Endothelial cell of umbilical vein (primary cell): ENCODE measurements at regions of chr5 and their contacts with region 1.

Region 1: GRCh38 chr5:96256778-96257470 is 176.1 kb downstream of the PCSK1 start:
- DNase-seq: peak; percentile 64
- H3K4me3 ChIP-seq: no peak overlapping the region
- H3K27ac ChIP-seq: no peak overlapping the region
- H3K4me1 ChIP-seq: peaks cover 55% of the 10 kb centered on the region
- H3K27me3 ChIP-seq: no peaks in the 10 kb centered on the region
- CTCF ChIP-seq: no peak
- POLR2A ChIP-seq: no peak

Region 2: DNA sequence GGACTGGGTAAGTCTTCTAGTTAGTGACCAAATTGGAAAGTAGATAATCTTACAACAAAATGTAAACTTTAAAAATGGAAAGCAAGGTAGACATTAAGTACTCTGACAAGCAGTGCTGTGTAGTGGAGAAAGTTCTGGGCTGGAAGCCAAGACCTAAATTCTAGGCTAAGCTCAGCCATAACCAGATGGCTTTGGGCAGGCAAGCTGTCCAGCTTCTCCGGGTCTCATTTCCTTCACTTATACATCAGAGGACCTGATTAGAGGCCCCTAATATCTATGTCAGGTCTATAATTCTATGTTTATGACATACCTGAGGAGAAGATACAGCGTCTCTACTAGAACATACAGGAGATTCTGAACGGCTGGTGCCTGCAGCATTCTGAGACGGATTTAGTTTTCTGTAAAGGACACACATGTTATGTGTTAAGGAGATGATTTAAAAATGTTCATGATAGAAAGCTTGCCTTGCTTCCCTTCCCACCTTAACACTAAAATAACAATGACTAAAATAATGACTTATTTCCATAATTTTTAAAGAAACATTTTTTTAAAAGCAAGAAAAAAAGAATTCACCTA is 356.5 kb before region 1 on chr5:
- CTCF ChIA-PET with region 1: no interaction called
- POLR2A ChIA-PET with region 1: no interaction called
- dilution Hi-C with region 1: no loop called
- intact Hi-C with region 1: loop called (anchors 5 kb)
- DNase-seq: no peak
- H3K4me3 ChIP-seq: no peak overlapping the region
- H3K27ac ChIP-seq: no peak overlapping the region
- H3K4me1 ChIP-seq: peaks cover 8% of the 10 kb centered on the region
- H3K27me3 ChIP-seq: no peaks in the 10 kb centered on the region
- CTCF ChIP-seq: no peak
- POLR2A ChIP-seq: no peak

Region 3: GRCh38 chr5:96198356-96199058 is 58.4 kb before region 1 on chr5:
- CTCF ChIA-PET with region 1: no interaction called
- POLR2A ChIA-PET with region 1: no interaction called
- dilution Hi-C with region 1: no loop called
- intact Hi-C with region 1: loop called (anchors 2 kb)
- DNase-seq: peak; percentile 93
- H3K4me3 ChIP-seq: no peak overlapping the region
- H3K27ac ChIP-seq: peak overlapping the region; percentile 40
- H3K4me1 ChIP-seq: peaks cover 16% of the 10 kb centered on the region
- H3K27me3 ChIP-seq: no peaks in the 10 kb centered on the region
- CTCF ChIP-seq: no peak
- POLR2A ChIP-seq: no peak

Region 4: GRCh38 chr5:96734871-96735325 is 478.0 kb after region 1 on chr5:
- CTCF ChIA-PET with region 1: no interaction called
- POLR2A ChIA-PET with region 1: no interaction called
- dilution Hi-C with region 1: no loop called
- intact Hi-C with region 1: no loop called
- DNase-seq: no peak
- H3K4me3 ChIP-seq: no peak overlapping the region
- H3K27ac ChIP-seq: no peak overlapping the region
- H3K4me1 ChIP-seq: peaks cover 3% of the 10 kb centered on the region
- H3K27me3 ChIP-seq: no peaks in the 10 kb centered on the region
- CTCF ChIP-seq: no peak
- POLR2A ChIP-seq: no peak